Ovary (tissue), 10 donors: ENCODE measurements at regions of chr3 and their contacts with region 1.

Region 1: GRCh38 chr3:44396200-44397171 is 57.9 kb downstream of the TCAIM start:
- DNase-seq: peak in 2 of 5 donors; percentile 23 to 43
- H3K4me3 ChIP-seq: no peak overlapping the region
- H3K27ac ChIP-seq: peak overlapping the region in 1 of 2 donors; percentile 29
- H3K4me1 ChIP-seq: peaks cover 4% of the 10 kb centered on the region
- H3K27me3 ChIP-seq: no peaks in the 10 kb centered on the region
- CTCF ChIP-seq: no peak
- EP300 ChIP-seq: no peak
- POLR2A ChIP-seq: no peak

Region 2: GRCh38 chr3:44338010-44338827 is 58.3 kb before region 1 on chr3 and contains the start of gene TCAIM:
- intact Hi-C with region 1: loop called in 1 of 4 experiments (anchors 10 kb)
- DNase-seq: peak; percentile 97 to 98 (median 98)
- H3K4me3 ChIP-seq: peak within 1 kb of the TSS; percentile 76
- H3K27ac ChIP-seq: peak within 1 kb of the TSS; percentile 73 to 98
- H3K4me1 ChIP-seq: no peaks in the 10 kb centered on the region
- H3K27me3 ChIP-seq: no peaks in the 10 kb centered on the region
- CTCF ChIP-seq: no peak
- EP300 ChIP-seq: no peak
- POLR2A ChIP-seq: peak; percentile 89
- total RNA-seq, gene TCAIM: 18.7 to 24.0 (median 22.0) TPM

Region 3: GRCh38 chr3:44661189-44661588 is 264.7 kb after region 1 on chr3:
- intact Hi-C with region 1: no loop called
- DNase-seq: no peak
- H3K4me3 ChIP-seq: no peak overlapping the region
- H3K27ac ChIP-seq: no peak overlapping the region
- H3K4me1 ChIP-seq: no peaks in the 10 kb centered on the region
- H3K27me3 ChIP-seq: no peaks in the 10 kb centered on the region
- CTCF ChIP-seq: no peak
- EP300 ChIP-seq: no peak
- POLR2A ChIP-seq: no peak